B cell (primary cell): ENCODE measurements at regions of chr4 and their contacts with region 1.

Region 1: GRCh38 chr4:163744861-163745260 is 250.4 kb downstream of the TMA16 start:
- DNase-seq: peak; percentile 6
- ATAC-seq: no peak
- H3K4me3 ChIP-seq: no peak overlapping the region
- H3K4me3 Mint-ChIP-seq: no peak overlapping the region
- H3K27ac ChIP-seq: no peak overlapping the region
- H3K27ac Mint-ChIP-seq: no peak overlapping the region
- H3K4me1 ChIP-seq: peaks cover 0 to 8% of the 10 kb centered on the region in 2 donors
- H3K4me1 Mint-ChIP-seq: peaks cover 5% of the 10 kb centered on the region
- H3K27me3 ChIP-seq: no peaks in the 10 kb centered on the region
- H3K27me3 Mint-ChIP-seq: peaks cover 5% of the 10 kb centered on the region
- CTCF ChIP-seq: no peak

Region 2: GRCh38 chr4:163395758-163396157 is 349.1 kb before region 1 on chr4:
- CTCF ChIA-PET with region 1: no interaction called
- POLR2A ChIA-PET with region 1: no interaction called
- intact Hi-C with region 1: no loop called
- DNase-seq: no peak
- ATAC-seq: no peak
- H3K4me3 ChIP-seq: no peak overlapping the region
- H3K4me3 Mint-ChIP-seq: peak overlapping the region; percentile 17
- H3K27ac ChIP-seq: no peak overlapping the region
- H3K27ac Mint-ChIP-seq: no peak overlapping the region
- H3K4me1 ChIP-seq: no peaks in the 10 kb centered on the region
- H3K4me1 Mint-ChIP-seq: no peaks in the 10 kb centered on the region
- H3K27me3 ChIP-seq: no peaks in the 10 kb centered on the region
- H3K27me3 Mint-ChIP-seq: peaks cover 13% of the 10 kb centered on the region
- CTCF ChIP-seq: no peak

Region 3: GRCh38 chr4:163562496-163562895 is 182.4 kb before region 1 on chr4:
- CTCF ChIA-PET with region 1: no interaction called
- POLR2A ChIA-PET with region 1: interaction called, 12 read pairs
- intact Hi-C with region 1: no loop called
- DNase-seq: no peak
- ATAC-seq: no peak
- H3K4me3 ChIP-seq: no peak overlapping the region
- H3K4me3 Mint-ChIP-seq: no peak overlapping the region
- H3K27ac ChIP-seq: peak overlapping the region in 1 of 2 donors; percentile 76
- H3K27ac Mint-ChIP-seq: peak overlapping the region; percentile 81
- H3K4me1 ChIP-seq: peaks cover 41 to 60% of the 10 kb centered on the region in 2 donors
- H3K4me1 Mint-ChIP-seq: peaks cover 75% of the 10 kb centered on the region
- H3K27me3 ChIP-seq: no peaks in the 10 kb centered on the region
- H3K27me3 Mint-ChIP-seq: no peaks in the 10 kb centered on the region
- CTCF ChIP-seq: no peak

Region 4: DNA sequence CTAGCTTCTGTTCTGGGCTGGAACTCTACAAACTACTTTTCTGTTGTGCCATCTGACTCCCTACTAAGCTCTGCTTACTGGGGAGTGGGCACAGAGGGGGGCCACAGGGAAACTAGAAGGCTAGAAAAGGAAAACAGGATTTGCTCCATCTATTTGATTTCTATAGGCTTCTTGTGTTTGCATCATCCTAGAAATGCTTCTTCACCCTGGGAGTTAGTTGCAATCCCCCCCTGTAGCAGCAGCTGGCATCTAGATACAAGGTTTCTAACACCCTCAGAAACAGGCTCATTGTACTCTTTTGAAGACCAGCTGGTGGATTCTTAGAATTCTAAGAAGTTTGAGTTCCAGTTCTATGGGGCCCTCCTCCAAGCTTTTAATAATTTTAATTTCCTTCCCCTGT is 37.0 kb before region 1 on chr4:
- CTCF ChIA-PET with region 1: no interaction called
- POLR2A ChIA-PET with region 1: no interaction called
- intact Hi-C with region 1: no loop called
- DNase-seq: no peak
- ATAC-seq: no peak
- H3K4me3 ChIP-seq: no peak overlapping the region
- H3K4me3 Mint-ChIP-seq: no peak overlapping the region
- H3K27ac ChIP-seq: no peak overlapping the region
- H3K27ac Mint-ChIP-seq: no peak overlapping the region
- H3K4me1 ChIP-seq: no peaks in the 10 kb centered on the region
- H3K4me1 Mint-ChIP-seq: no peaks in the 10 kb centered on the region
- H3K27me3 ChIP-seq: peaks cover 0 to 12% (median 0%) of the 10 kb centered on the region in 4 experiments
- H3K27me3 Mint-ChIP-seq: peaks cover 7% of the 10 kb centered on the region
- CTCF ChIP-seq: no peak

Region 5: GRCh38 chr4:163795885-163796284 is 51.0 kb after region 1 on chr4:
- CTCF ChIA-PET with region 1: no interaction called
- POLR2A ChIA-PET with region 1: no interaction called
- intact Hi-C with region 1: no loop called
- DNase-seq: no peak
- ATAC-seq: no peak
- H3K4me3 ChIP-seq: no peak overlapping the region
- H3K4me3 Mint-ChIP-seq: no peak overlapping the region
- H3K27ac ChIP-seq: no peak overlapping the region
- H3K27ac Mint-ChIP-seq: no peak overlapping the region
- H3K4me1 ChIP-seq: no peaks in the 10 kb centered on the region
- H3K4me1 Mint-ChIP-seq: no peaks in the 10 kb centered on the region
- H3K27me3 ChIP-seq: peaks cover 0 to 5% (median 0%) of the 10 kb centered on the region in 4 experiments
- H3K27me3 Mint-ChIP-seq: peaks cover 25% of the 10 kb centered on the region
- CTCF ChIP-seq: no peak